Thyroid gland (tissue), 4 donors: ENCODE measurements at regions of chr20 and their contacts with region 1.

Region 1: DNA sequence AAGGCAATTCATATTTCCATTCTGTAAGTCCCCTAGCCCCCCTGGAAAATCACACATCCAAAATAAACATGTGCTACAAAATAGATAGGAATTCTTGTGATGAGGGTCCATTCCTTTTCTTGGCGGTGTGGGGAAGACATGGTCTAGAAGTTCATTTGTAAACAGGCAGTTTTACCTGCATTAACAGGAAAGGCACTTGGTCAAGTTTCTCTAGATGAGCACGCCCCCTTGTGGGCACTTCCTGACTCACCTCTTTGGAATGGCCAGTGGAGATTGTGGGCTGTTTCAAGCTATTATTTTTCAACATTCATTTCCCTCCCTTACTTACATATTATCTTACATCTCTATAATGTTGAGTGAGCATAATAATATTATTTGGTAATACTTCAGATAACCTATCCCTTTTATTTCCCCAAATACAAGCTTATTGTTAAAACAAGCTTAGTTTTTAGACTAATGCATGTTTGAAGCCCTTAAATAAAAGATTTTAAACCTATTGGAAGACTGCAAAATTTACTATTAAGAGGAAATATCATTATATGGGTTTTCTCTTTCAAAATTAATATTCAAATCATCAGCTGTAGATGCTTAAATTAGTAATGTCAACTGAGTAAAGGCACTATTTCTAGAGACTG is 92.1 kb downstream of the TASP1 start:
- DNase-seq: peak; percentile 85 to 91
- H3K4me3 ChIP-seq: no peak overlapping the region
- H3K27ac ChIP-seq: peak overlapping the region in 1 of 3 donors; percentile 23
- H3K4me1 ChIP-seq: peaks cover 4 to 7% of the 10 kb centered on the region in 2 donors
- H3K27me3 ChIP-seq: no peaks in the 10 kb centered on the region
- CTCF ChIP-seq: peak in 5 of 6 experiments; percentile 71 to 87 (median 79)
- POLR2A ChIP-seq: no peak

Region 2: DNA sequence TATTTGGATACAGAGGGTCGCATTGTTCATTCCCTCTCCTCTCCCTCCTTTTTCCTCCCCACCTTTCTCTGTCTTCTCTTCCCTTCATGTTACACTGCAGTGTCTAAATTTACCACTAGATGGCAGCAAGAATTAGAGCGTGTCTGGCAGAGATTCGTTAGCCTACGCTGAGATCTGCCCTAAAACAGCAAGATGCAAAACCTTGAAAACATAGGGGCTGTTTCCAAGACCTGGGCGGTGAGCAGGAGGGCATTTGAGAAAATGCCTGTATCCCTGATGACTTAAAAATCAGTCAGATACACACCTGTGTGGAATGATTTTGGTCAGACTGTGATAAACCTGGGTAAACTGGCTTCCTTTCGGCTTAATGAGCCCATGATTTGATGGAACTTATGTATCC is 427.0 kb before region 1 on chr20:
- intact Hi-C with region 1: loop called (anchors 10 kb)
- DNase-seq: peak; percentile 31 to 38
- H3K4me3 ChIP-seq: no peak overlapping the region
- H3K27ac ChIP-seq: peak overlapping the region; percentile 64 to 73 (median 72)
- H3K4me1 ChIP-seq: peaks cover 52 to 55% of the 10 kb centered on the region in 2 donors
- H3K27me3 ChIP-seq: no peaks in the 10 kb centered on the region
- CTCF ChIP-seq: peak; percentile 62 to 99 (median 90)
- POLR2A ChIP-seq: no peak

Region 3: GRCh38 chr20:13458860-13459451 is 87.7 kb before region 1 on chr20:
- intact Hi-C with region 1: loop called (anchors 10 kb)
- DNase-seq: peak; percentile 25 to 36
- H3K4me3 ChIP-seq: no peak overlapping the region
- H3K27ac ChIP-seq: no peak overlapping the region
- H3K4me1 ChIP-seq: no peaks in the 10 kb centered on the region
- H3K27me3 ChIP-seq: no peaks in the 10 kb centered on the region
- CTCF ChIP-seq: peak; percentile 53 to 80 (median 63)
- POLR2A ChIP-seq: no peak

Region 4: DNA sequence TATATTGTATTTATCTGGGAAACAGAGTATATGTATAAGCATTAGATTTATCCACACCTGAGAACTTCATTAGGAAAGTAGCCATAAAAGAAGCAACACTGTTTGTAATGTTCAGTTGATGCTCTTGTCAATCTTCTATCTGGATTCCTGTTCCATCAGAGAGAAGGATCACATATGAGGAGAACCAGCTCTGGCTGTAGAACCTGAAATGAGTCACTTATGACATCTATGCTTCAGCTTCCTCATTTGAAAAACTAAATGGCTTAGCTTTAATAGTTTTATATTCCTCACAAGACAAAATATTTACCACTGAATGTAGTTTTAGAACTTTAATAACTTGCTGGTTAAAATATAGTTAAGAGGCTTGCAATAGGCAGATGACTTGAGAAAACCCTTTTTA is 52.6 kb before region 1 on chr20:
- intact Hi-C with region 1: no loop called
- DNase-seq: no peak
- H3K4me3 ChIP-seq: no peak overlapping the region
- H3K27ac ChIP-seq: no peak overlapping the region
- H3K4me1 ChIP-seq: peaks cover 0 to 14% of the 10 kb centered on the region in 2 donors
- H3K27me3 ChIP-seq: no peaks in the 10 kb centered on the region
- CTCF ChIP-seq: no peak
- POLR2A ChIP-seq: no peak